Right ventricle myocardium superior (tissue), 1 donor: ENCODE measurements at regions of chr17 and their contacts with region 1.

Region 1: DNA sequence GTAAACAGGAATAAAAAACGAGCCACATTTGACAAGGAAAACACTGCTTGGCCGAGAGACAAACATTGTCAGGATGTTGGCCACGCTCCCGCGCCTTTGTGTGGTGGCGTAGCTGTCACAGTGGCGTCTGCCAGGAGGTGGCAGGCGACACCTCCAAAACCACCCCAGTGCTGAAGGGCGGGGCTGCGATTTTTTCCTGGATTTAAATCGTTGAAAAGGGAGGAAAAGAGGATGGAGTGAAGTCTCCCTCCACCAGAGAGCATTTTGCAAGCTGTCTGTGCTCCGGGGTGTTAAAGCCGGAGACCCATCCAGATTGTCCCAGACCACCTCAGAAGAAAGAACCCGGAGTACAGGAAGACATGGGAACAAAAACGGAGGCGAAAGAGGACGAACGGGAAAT is 12.7 kb downstream of the MRM3 start:
- DNase-seq: peak; percentile 92
- ATAC-seq: peak; percentile 84

Region 2: GRCh38 chr17:879549-880442 is 84.9 kb after region 1 on chr17:
- intact Hi-C with region 1: loop called (anchors 10 kb)
- DNase-seq: peak; percentile 84
- ATAC-seq: peak; percentile 40

Region 3: DNA sequence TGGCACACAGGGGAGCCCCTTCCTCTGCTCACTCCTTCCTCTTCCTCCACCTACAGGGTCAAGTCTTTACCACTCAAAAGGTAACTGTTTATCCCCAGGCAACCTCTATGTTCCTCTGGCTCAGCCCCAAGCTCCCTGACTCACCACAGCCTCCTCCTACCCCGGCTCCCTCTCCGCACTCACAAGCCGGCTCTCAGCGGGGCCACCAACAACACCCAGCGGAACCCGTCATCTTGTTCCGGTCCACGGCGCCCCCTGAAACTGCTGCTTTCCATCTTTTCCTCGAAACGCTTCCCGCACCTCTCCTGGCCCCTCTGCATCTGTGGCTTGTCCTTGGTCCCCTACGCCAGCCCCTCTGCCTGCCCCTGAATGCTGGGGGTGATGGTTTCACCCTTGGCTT is 126.3 kb after region 1 on chr17:
- intact Hi-C with region 1: no loop called
- DNase-seq: no peak
- ATAC-seq: no peak

Region 4: DNA sequence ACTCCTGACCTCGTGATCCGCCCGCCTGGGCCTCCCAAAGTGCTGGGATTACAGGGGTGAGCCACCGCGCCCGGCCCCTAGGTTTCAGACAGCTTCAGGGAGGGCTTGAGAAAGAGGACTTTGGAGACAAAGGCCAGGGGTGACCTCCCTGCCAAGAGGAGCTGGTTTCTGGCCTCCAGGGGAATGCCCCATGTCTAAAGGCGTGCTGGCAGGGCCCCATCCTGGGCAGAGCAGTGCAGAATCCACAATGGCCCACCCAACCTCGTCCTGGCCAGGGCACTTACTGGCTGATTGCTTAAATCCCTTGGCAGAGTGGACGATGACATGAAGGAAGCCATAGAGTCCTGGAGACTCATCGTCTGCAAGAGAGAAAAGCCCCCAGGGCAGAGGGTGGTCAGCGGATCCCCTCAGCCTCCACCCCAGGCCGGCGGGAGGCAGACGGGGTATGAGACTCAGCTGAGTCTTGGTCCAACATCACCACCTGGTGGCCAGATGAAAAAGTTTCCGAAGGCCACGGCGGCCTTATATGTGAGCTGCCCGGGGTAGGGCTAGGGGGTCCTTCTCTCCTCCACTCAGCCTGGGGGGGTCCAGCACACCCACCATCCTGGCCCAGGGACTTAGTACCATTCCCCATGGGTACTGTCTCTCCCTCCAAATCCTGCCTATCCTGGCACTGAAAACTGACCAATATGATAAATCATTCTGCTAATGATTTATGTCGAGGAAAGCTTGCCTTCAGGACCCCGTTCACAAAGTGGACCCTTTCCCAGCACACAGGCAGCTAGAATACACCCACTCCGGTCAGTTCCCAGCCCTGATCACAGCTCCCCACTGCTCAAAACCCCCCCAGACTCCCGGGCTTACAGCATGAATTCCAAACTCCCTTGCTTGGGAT is 261.1 kb after region 1 on chr17:
- intact Hi-C with region 1: loop called (anchors 10 kb)
- DNase-seq: peak; percentile 72
- ATAC-seq: peak; percentile 83